ENCODE measurements at regions of chr1 and their contacts with region 1.

Region 1: GRCh38 chr1:163174524-163175437 is 27.9 kb downstream of the RGS5 start:
- DNase-seq: peak; percentile 77
- H3K4me3 ChIP-seq: no peak overlapping the region
- H3K27ac ChIP-seq: no peak overlapping the region
- H3K4me1 ChIP-seq: peaks cover 54% of the 10 kb centered on the region
- H3K27me3 ChIP-seq: no peaks in the 10 kb centered on the region
- CTCF ChIP-seq: peak; percentile 77 to 90
- POLR2A ChIP-seq: no peak

Region 2: DNA sequence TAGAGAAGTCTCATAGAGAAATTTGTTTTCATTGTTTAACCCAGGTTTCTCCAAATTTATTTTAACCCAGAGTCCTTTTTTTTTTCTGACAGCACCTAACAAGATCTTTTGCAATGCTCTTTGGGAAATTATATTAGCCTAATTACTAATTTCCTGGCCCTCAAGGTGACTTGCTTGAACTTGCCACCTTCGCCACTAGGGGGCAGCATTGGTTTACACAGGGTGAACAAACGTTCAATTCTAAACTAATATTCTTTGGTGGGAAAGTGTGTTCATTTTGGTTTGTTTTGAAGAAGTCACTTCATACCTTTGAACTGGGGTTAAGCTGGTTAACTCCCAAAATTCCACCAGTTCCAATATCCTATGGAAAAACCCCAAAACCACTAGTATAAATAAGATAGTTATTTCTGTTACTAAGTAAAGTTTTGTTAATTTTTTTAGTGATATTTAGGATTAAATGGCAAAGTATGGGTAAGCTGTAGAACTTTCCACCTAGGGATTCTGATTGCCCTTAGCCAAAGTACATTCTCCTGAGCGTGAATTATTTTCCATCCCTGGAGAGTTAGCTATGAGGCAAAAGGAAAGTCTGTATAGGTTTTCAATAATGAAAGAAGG is 326.8 kb before region 1 on chr1:
- CTCF ChIA-PET with region 1: interaction called, 46 read pairs
- POLR2A ChIA-PET with region 1: interaction called, 3 read pairs
- dilution Hi-C with region 1: no loop called
- intact Hi-C with region 1: no loop called
- DNase-seq: peak; percentile 78
- H3K4me3 ChIP-seq: no peak overlapping the region
- H3K27ac ChIP-seq: no peak overlapping the region
- H3K4me1 ChIP-seq: no peaks in the 10 kb centered on the region
- H3K27me3 ChIP-seq: no peaks in the 10 kb centered on the region
- CTCF ChIP-seq: peak; percentile 78 to 82
- POLR2A ChIP-seq: no peak

Region 3: GRCh38 chr1:162854245-162854882 is 320.4 kb before region 1 on chr1:
- CTCF ChIA-PET with region 1: interaction called, 46 read pairs
- POLR2A ChIA-PET with region 1: no interaction called
- dilution Hi-C with region 1: no loop called
- intact Hi-C with region 1: loop called (anchors 1 kb)
- DNase-seq: peak; percentile 82
- H3K4me3 ChIP-seq: peak overlapping the region in 1 of 3 experiments; percentile 4
- H3K27ac ChIP-seq: peak overlapping the region; percentile 93
- H3K4me1 ChIP-seq: peaks cover 57% of the 10 kb centered on the region
- H3K27me3 ChIP-seq: no peaks in the 10 kb centered on the region
- CTCF ChIP-seq: peak; percentile 63 to 68
- POLR2A ChIP-seq: peak; percentile 7

Region 4: GRCh38 chr1:162973381-162973795 is 201.4 kb before region 1 on chr1:
- CTCF ChIA-PET with region 1: no interaction called
- POLR2A ChIA-PET with region 1: no interaction called
- dilution Hi-C with region 1: no loop called
- intact Hi-C with region 1: loop called (anchors 5 kb)
- DNase-seq: peak; percentile 84
- H3K4me3 ChIP-seq: no peak overlapping the region
- H3K27ac ChIP-seq: peak overlapping the region; percentile 46
- H3K4me1 ChIP-seq: peaks cover 12% of the 10 kb centered on the region
- H3K27me3 ChIP-seq: no peaks in the 10 kb centered on the region
- CTCF ChIP-seq: no peak
- POLR2A ChIP-seq: no peak

Region 5: DNA sequence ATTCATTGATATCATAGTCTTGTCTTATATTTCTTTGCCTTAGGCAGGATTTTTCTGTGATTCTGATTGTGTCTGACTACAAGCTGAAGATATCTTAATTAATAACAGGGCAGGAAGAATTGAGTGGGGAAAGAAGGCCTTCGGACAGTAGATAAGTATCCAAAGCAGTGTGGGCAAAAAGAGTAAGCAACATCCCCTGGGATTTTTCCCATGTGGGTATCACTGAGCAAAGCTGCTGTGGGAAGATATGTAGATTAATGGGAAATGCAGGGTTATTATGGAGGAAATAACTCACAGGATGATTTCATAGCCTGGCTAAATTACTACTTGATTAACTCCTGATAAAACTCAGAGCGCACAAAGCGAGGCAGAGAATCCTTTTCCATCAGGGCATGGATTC is 27.8 kb before region 1 on chr1:
- CTCF ChIA-PET with region 1: interaction called, 11 read pairs
- POLR2A ChIA-PET with region 1: no interaction called
- dilution Hi-C with region 1: no loop called
- intact Hi-C with region 1: no loop called
- DNase-seq: peak; percentile 90
- H3K4me3 ChIP-seq: no peak overlapping the region
- H3K27ac ChIP-seq: peak overlapping the region; percentile 72
- H3K4me1 ChIP-seq: peaks cover 13% of the 10 kb centered on the region
- H3K27me3 ChIP-seq: no peaks in the 10 kb centered on the region
- CTCF ChIP-seq: no peak
- POLR2A ChIP-seq: no peak

Region 6: GRCh38 chr1:163195728-163196448 is 21.1 kb after region 1 on chr1:
- CTCF ChIA-PET with region 1: interaction called, 18 read pairs
- POLR2A ChIA-PET with region 1: no interaction called
- dilution Hi-C with region 1: no loop called
- intact Hi-C with region 1: loop called (anchors 1 kb)
- DNase-seq: peak; percentile 97
- H3K4me3 ChIP-seq: no peak overlapping the region
- H3K27ac ChIP-seq: peak overlapping the region; percentile 79
- H3K4me1 ChIP-seq: peaks cover 53% of the 10 kb centered on the region
- H3K27me3 ChIP-seq: no peaks in the 10 kb centered on the region
- CTCF ChIP-seq: no peak
- POLR2A ChIP-seq: peak; percentile 48

Region 7: DNA sequence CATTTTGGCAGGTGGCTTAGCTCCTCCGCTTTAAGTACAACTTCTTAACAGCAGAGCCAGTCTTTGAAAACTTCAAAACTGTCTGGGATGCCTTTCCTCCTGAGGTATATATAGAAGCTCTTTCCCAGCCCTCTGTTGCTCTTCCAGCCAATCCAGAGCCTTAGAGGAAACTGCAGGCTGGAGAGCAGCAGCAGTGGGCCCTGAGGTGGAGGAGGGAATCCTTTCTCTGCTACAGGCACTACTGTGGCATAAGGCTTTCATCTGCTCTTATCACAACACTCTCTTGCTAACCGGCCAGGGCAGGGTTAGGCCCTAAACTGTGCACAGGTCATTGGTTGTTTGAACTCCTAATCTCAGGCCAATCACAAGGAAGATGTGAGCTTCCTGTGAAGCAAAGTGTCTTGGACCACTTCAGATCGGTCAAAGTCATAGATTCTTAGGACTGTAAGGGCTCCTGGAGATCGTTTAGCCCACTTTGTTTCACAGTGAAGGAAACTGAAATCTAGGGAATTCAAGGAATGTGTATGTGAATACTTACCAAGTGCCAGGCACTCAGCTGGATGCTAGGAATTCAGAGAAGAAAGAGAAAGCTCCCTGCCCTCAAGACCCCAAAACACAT is 28.2 kb after region 1 on chr1 and contains the start of gene RGS5:
- CTCF ChIA-PET with region 1: interaction called, 18 read pairs
- POLR2A ChIA-PET with region 1: no interaction called
- dilution Hi-C with region 1: no loop called
- intact Hi-C with region 1: no loop called
- DNase-seq: peak; percentile 78
- H3K4me3 ChIP-seq: peak within 1 kb of the TSS; percentile 25 to 98 (median 92)
- H3K27ac ChIP-seq: peak within 1 kb of the TSS; percentile 77
- H3K4me1 ChIP-seq: peaks cover 41% of the 10 kb centered on the region
- H3K27me3 ChIP-seq: no peaks in the 10 kb centered on the region
- CTCF ChIP-seq: no peak
- POLR2A ChIP-seq: peak; percentile 67
- total RNA-seq, gene RGS5: 770 and 1,035 TPM in 2 replicates

Region 8: DNA sequence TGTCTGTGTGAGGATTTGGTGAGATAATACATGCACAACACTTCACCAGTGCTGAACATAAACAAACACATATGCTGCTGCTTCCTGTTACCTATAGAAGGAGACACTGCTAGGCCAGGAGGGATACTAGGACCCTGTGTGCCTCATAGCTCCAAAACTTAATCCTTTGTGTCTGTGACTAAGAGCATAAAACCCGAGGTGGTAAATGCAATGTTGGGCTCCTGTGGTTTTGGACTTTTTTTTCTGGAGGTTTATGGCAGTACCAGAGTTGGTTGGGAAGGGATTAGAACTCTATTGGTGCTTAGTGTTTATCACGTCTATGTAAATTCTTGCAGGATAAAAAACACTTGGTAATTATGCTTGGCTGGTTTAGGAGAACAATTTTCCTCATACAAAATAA is 269.9 kb after region 1 on chr1:
- CTCF ChIA-PET with region 1: no interaction called
- POLR2A ChIA-PET with region 1: no interaction called
- dilution Hi-C with region 1: no loop called
- intact Hi-C with region 1: no loop called
- DNase-seq: no peak
- H3K4me3 ChIP-seq: no peak overlapping the region
- H3K27ac ChIP-seq: no peak overlapping the region
- H3K4me1 ChIP-seq: no peaks in the 10 kb centered on the region
- H3K27me3 ChIP-seq: no peaks in the 10 kb centered on the region
- CTCF ChIP-seq: no peak
- POLR2A ChIP-seq: no peak

Measured in endothelial cell of umbilical vein (primary cell).